Aorta (tissue), 5 donors: ENCODE measurements at regions of chr14 and their contacts with region 1.

Region 1: DNA sequence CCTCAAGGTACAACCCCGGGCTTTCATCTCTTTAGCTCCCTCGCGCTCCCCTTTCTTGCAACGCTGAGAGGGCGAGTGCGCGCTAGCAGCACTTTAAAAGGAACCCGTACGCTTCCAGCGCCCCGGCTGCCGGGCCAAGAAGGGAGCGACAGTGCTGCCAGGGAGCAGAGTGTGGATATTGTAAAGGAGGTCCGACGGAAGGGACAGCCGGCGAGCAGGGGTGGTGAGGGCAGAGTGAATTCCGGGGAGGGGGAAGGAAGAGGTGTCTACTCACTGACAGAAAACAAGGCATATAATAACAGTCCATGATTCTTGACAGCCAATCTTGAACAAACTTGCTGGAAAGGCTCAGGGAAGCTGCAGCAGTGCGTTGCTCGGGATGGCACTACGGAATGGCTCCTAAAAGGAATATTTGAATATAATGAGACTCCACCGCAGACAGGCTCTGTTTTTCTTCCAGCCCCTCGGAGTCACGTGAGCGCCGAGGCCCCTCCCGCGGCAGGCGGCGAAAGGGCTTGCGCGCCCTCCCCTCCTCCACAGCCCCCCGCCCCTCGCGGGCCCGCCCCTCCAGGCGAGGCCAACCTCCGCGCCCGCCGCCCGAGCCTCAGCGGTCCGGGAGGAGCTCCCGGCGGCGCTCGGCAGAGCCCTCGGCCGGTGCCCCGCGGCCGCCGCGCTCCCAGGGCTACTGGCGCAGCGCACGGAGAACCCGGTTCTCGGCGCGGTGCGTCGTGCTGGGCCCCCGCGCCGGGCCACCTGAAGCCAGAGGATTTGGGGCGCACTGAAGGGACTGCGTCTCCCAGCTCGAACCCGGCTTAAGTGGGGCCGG is 3.4 kb downstream of the BMP4 start:
- DNase-seq: peak; percentile 91 to 95
- ATAC-seq: peak; percentile 92
- H3K4me3 ChIP-seq: peak overlapping the region; percentile 55 to 72
- H3K27ac ChIP-seq: peak overlapping the region in 1 of 2 donors; percentile 69
- H3K4me1 ChIP-seq: no peaks in the 10 kb centered on the region
- H3K27me3 ChIP-seq: no peaks in the 10 kb centered on the region

Region 2: GRCh38 chr14:53778263-53778662 is 175.0 kb before region 1 on chr14:
- intact Hi-C with region 1: no loop called
- DNase-seq: no peak
- ATAC-seq: no peak
- H3K4me3 ChIP-seq: no peak overlapping the region
- H3K27ac ChIP-seq: no peak overlapping the region
- H3K4me1 ChIP-seq: no peaks in the 10 kb centered on the region
- H3K27me3 ChIP-seq: no peaks in the 10 kb centered on the region

Region 3: DNA sequence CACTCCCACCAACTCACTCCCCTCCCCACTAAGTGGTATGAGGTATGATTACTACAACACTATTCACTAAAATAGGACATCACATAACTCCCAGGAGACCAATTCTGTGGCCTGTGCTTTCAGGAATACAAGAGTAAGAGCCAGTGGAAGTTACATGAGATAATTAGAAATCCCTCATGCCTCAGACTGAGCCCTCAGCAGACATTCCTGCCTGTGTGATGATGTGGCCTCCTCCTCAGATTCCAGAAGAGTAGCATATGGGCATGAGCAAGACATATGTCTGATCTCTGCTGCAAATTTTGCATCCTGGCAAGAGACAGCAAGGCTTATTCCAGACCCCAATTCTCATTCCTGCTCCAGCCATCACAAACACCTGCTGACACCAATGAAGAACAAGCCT is 49.4 kb after region 1 on chr14:
- intact Hi-C with region 1: loop called in 1 of 2 experiments (anchors 5 kb)
- DNase-seq: no peak
- ATAC-seq: no peak
- H3K4me3 ChIP-seq: no peak overlapping the region
- H3K27ac ChIP-seq: no peak overlapping the region
- H3K4me1 ChIP-seq: peaks cover 0 to 3% of the 10 kb centered on the region in 2 donors
- H3K27me3 ChIP-seq: no peaks in the 10 kb centered on the region

Region 4: GRCh38 chr14:54108481-54109471 is 155.6 kb after region 1 on chr14:
- intact Hi-C with region 1: loop called in 1 of 2 experiments (anchors 5 kb)
- DNase-seq: no peak
- ATAC-seq: no peak
- H3K4me3 ChIP-seq: peak overlapping the region in 1 of 2 donors; percentile 10
- H3K27ac ChIP-seq: no peak overlapping the region
- H3K4me1 ChIP-seq: peaks cover 3 to 14% of the 10 kb centered on the region in 2 donors
- H3K27me3 ChIP-seq: no peaks in the 10 kb centered on the region

Region 5: GRCh38 chr14:54338696-54339317 is 385.6 kb after region 1 on chr14:
- intact Hi-C with region 1: loop called in 1 of 2 experiments (anchors 10 kb)
- DNase-seq: no peak
- ATAC-seq: no peak
- H3K4me3 ChIP-seq: no peak overlapping the region
- H3K27ac ChIP-seq: no peak overlapping the region
- H3K4me1 ChIP-seq: no peaks in the 10 kb centered on the region
- H3K27me3 ChIP-seq: no peaks in the 10 kb centered on the region